Esophagus muscularis mucosa (tissue), 4 donors: ENCODE measurements at regions of chr3 and their contacts with region 1.

Region 1: DNA sequence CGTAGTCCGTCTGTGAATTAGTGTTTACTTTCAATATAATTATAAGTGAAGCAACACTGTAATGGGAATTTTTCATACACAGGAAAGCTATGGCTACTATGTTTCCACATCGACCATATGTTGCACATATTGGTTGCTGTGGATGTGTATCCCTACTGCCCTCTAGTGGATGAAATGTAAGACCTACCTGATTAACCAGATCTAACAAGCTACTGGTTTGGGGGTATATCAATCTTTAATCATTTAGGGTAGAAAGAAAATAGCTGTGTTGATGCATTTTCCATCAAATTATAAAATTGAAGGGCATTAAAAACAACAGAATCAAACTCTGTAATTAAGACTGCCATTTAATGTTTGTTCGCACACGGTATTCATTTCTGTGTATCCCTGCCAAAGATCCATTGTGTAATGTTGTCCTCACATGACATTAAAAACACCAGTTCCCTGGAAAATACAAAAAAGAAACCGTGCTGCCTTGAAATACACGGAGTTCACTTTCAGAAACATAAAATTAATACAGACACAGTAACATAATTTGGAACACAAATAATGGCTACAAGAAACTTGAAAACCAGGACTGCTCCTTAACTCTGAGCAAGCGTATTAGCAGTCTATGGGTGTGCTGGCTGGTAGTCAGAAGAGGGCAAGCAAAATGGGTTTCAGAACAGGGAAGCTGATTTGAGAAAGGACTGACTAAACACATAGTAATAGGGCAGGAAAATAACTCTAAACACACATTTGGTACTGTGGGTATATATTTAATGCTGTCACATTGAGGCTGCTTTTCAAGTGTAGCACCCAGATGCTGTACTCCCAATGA is 125.1 kb downstream of the TIGIT start:
- DNase-seq: no peak
- H3K4me3 ChIP-seq: peak overlapping the region in 3 of 4 donors; percentile 27 to 39 (median 33)
- H3K27ac ChIP-seq: peak overlapping the region; percentile 30 to 56 (median 44)
- H3K4me1 ChIP-seq: peaks cover 16 to 29% (median 25%) of the 10 kb centered on the region in 4 donors
- H3K27me3 ChIP-seq: no peaks in the 10 kb centered on the region
- CTCF ChIP-seq: peak; percentile 73 to 84 (median 83)
- EP300 ChIP-seq: no peak
- POLR2A ChIP-seq: no peak

Region 2: GRCh38 chr3:114274929-114275328 is 144.0 kb before region 1 on chr3:
- intact Hi-C with region 1: no loop called
- DNase-seq: no peak
- H3K4me3 ChIP-seq: no peak overlapping the region
- H3K27ac ChIP-seq: no peak overlapping the region
- H3K4me1 ChIP-seq: no peaks in the 10 kb centered on the region
- H3K27me3 ChIP-seq: no peaks in the 10 kb centered on the region
- CTCF ChIP-seq: no peak
- EP300 ChIP-seq: no peak
- POLR2A ChIP-seq: no peak

Region 3: DNA sequence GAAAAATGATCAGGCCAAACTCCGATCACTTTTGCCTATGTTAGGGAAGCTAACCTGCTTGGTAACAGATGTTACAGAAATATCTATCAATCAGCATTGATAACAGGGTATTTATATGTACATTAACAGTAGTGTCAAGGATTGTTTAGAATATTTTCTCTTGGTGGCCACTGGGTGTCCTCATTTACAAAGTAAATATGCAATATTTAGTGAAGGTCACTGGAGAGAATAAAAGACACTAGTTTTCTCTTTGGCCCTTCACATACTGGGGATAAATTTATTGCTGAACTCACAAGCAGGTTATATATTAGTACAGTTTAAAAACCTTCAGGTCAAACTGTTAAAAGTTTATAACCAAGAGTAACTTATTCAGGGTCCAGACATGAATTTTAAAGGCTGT is 56.1 kb before region 1 on chr3:
- intact Hi-C with region 1: loop called (anchors 10 kb)
- DNase-seq: no peak
- H3K4me3 ChIP-seq: no peak overlapping the region
- H3K27ac ChIP-seq: no peak overlapping the region
- H3K4me1 ChIP-seq: peaks cover 34 to 47% (median 42%) of the 10 kb centered on the region in 4 donors
- H3K27me3 ChIP-seq: no peaks in the 10 kb centered on the region
- CTCF ChIP-seq: peak; percentile 27 to 45 (median 37)
- EP300 ChIP-seq: no peak
- POLR2A ChIP-seq: no peak

Region 4: DNA sequence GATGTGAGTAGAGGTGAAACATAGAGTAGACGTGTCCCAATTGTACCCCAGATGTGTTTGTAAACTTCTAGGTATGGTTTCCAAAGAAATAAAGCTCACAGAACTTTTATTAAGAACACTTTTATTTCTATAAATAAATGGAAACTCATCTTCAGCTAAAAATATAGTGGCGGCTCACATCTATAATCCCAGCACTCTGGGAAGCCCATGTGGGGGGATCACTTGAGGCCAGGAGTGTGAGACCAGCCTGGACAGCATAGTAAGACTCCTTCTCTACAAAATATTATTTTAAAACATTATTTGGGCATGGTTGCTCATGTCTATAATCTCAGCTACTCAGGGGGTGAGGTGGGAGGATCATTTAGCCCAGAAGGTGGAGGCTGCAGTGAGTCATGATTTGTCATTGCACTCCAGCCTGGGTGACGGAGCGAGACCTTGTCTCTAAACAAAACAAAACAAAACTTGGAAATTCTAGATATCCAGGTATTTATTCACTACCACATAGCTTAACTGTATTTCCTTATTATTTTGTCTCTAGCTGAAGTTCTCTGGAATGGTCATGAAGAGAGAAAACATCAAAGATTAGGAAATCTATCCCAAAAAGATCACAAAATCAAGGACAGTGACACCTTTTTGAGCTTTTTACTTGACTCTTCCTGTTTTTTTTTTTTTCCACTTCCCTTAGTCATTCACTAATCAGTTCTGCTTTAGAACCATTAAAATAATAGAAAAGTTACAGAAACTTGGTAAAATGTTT is 133.0 kb after region 1 on chr3:
- intact Hi-C with region 1: no loop called
- DNase-seq: no peak
- H3K4me3 ChIP-seq: no peak overlapping the region
- H3K27ac ChIP-seq: no peak overlapping the region
- H3K4me1 ChIP-seq: peaks cover 0 to 11% (median 0%) of the 10 kb centered on the region in 4 donors
- H3K27me3 ChIP-seq: no peaks in the 10 kb centered on the region
- CTCF ChIP-seq: no peak
- EP300 ChIP-seq: no peak
- POLR2A ChIP-seq: no peak

Region 5: DNA sequence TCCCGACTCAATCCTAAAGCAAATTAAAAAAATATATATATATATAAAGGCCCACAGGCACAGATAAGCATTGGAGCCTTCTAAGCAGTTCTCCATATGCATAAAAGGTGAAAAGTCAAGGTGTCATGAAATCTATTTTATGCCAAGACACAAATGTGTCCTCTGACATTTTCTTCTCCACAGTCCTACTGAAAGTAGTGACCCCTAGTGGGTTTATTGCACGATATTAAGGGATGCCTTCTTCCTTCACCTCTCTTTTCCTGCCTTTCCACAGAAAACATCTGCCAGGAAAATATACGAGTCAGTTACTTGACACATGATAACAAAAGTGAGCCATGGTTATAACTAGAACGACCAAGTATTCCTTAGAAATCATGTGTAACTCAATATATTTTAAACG is 178.1 kb after region 1 on chr3:
- intact Hi-C with region 1: no loop called
- DNase-seq: no peak
- H3K4me3 ChIP-seq: no peak overlapping the region
- H3K27ac ChIP-seq: no peak overlapping the region
- H3K4me1 ChIP-seq: peaks cover 0 to 13% (median 7%) of the 10 kb centered on the region in 4 donors
- H3K27me3 ChIP-seq: no peaks in the 10 kb centered on the region
- CTCF ChIP-seq: no peak
- EP300 ChIP-seq: no peak
- POLR2A ChIP-seq: no peak